HepG2 (cell line): ENCODE measurements at regions of chr19 and their contacts with region 1.

Region 1: GRCh38 chr19:35352448-35353304 is 5.0 kb downstream of the FFAR1 start:
- DNase-seq: peak; percentile 72
- ATAC-seq: peak; percentile 73
- H3K4me3 ChIP-seq: no peak overlapping the region
- H3K27ac ChIP-seq: no peak overlapping the region
- H3K4me1 ChIP-seq: peaks cover 60% of the 10 kb centered on the region
- H3K27me3 ChIP-seq: 0 out of 5 replicates have a peak, but pooled peaks cover 0 to 1% of the 10 kb centered on the region in 2 experiments
- CTCF ChIP-seq: peak; percentile 97
- EP300 ChIP-seq: no peak
- POLR2A ChIP-seq: no peak
- RAD21 ChIP-seq: peak; percentile 94

Region 2: GRCh38 chr19:35124098-35125060 is 228.3 kb before region 1 on chr19:
- CTCF ChIA-PET with region 1: no interaction called
- POLR2A ChIA-PET with region 1: no interaction called
- in situ Hi-C with region 1: no loop called
- intact Hi-C with region 1: no loop called
- DNase-seq: no peak
- ATAC-seq: no peak
- H3K4me3 ChIP-seq: no peak overlapping the region
- H3K27ac ChIP-seq: no peak overlapping the region
- H3K4me1 ChIP-seq: peaks cover 88% of the 10 kb centered on the region
- H3K27me3 ChIP-seq: no peaks in the 10 kb centered on the region
- CTCF ChIP-seq: no peak
- EP300 ChIP-seq: no peak
- POLR2A ChIP-seq: no peak
- RAD21 ChIP-seq: no peak

Region 3: GRCh38 chr19:35395382-35396199 is 42.9 kb after region 1 on chr19:
- CTCF ChIA-PET with region 1: no interaction called
- POLR2A ChIA-PET with region 1: no interaction called
- in situ Hi-C with region 1: no loop called
- intact Hi-C with region 1: loop called (anchors 5 kb)
- DNase-seq: peak; percentile 65
- ATAC-seq: peak; percentile 96
- H3K4me3 ChIP-seq: peak overlapping the region in 2 of 3 experiments; percentile 27 to 61; a peak in 2 of 6 replicates
- H3K27ac ChIP-seq: peak overlapping the region; percentile 58
- H3K4me1 ChIP-seq: peaks cover 50% of the 10 kb centered on the region
- H3K27me3 ChIP-seq: 0 out of 5 replicates have a peak, but pooled peaks cover 0 to 2% of the 10 kb centered on the region in 2 experiments
- CTCF ChIP-seq: peak; percentile 24; the same call in 1 of the 2 replicates
- EP300 ChIP-seq: peak in 1 of 2 experiments; percentile 7; a peak in 1 of 4 replicates
- POLR2A ChIP-seq: no peak
- RAD21 ChIP-seq: no peak

Region 4: DNA sequence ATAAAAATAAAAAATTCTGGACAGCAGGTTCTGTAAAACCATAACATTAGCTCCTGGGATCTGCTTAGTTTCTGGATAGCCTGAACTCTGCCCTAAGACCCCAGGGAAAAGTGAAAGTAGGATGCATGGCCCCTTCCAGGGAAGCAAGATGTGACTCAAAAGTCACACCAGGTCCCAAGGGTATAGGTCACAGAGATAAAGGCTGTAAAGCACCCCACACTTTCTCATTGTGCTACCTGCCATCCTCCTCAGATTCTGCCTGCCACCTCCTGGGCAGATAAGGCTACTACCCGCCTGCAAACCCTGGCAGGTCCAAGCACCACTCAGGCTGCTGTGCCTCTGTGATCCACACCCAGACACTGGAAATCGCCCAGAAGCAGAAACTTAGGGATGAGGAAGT is 116.0 kb after region 1 on chr19:
- CTCF ChIA-PET with region 1: interaction called, 41 read pairs
- POLR2A ChIA-PET with region 1: no interaction called
- in situ Hi-C with region 1: loop called (anchors 5 kb)
- intact Hi-C with region 1: loop called (anchors 1 kb)
- DNase-seq: peak; percentile 54
- ATAC-seq: peak; percentile 98
- H3K4me3 ChIP-seq: no peak overlapping the region
- H3K27ac ChIP-seq: no peak overlapping the region
- H3K4me1 ChIP-seq: peaks cover 61% of the 10 kb centered on the region
- H3K27me3 ChIP-seq: no peaks in the 10 kb centered on the region
- CTCF ChIP-seq: peak; percentile 94
- EP300 ChIP-seq: no peak
- POLR2A ChIP-seq: no peak
- RAD21 ChIP-seq: peak; percentile 92

Region 5: GRCh38 chr19:35478803-35479601 is 126.3 kb after region 1 on chr19:
- CTCF ChIA-PET with region 1: no interaction called
- POLR2A ChIA-PET with region 1: no interaction called
- in situ Hi-C with region 1: no loop called
- intact Hi-C with region 1: no loop called
- DNase-seq: no peak
- ATAC-seq: no peak
- H3K4me3 ChIP-seq: no peak overlapping the region
- H3K27ac ChIP-seq: no peak overlapping the region
- H3K4me1 ChIP-seq: peaks cover 10% of the 10 kb centered on the region
- H3K27me3 ChIP-seq: no peaks in the 10 kb centered on the region
- CTCF ChIP-seq: 0 out of 2 replicates have a peak, but pooled peaks have one; percentile 4
- EP300 ChIP-seq: no peak
- POLR2A ChIP-seq: no peak
- RAD21 ChIP-seq: no peak

Region 6: DNA sequence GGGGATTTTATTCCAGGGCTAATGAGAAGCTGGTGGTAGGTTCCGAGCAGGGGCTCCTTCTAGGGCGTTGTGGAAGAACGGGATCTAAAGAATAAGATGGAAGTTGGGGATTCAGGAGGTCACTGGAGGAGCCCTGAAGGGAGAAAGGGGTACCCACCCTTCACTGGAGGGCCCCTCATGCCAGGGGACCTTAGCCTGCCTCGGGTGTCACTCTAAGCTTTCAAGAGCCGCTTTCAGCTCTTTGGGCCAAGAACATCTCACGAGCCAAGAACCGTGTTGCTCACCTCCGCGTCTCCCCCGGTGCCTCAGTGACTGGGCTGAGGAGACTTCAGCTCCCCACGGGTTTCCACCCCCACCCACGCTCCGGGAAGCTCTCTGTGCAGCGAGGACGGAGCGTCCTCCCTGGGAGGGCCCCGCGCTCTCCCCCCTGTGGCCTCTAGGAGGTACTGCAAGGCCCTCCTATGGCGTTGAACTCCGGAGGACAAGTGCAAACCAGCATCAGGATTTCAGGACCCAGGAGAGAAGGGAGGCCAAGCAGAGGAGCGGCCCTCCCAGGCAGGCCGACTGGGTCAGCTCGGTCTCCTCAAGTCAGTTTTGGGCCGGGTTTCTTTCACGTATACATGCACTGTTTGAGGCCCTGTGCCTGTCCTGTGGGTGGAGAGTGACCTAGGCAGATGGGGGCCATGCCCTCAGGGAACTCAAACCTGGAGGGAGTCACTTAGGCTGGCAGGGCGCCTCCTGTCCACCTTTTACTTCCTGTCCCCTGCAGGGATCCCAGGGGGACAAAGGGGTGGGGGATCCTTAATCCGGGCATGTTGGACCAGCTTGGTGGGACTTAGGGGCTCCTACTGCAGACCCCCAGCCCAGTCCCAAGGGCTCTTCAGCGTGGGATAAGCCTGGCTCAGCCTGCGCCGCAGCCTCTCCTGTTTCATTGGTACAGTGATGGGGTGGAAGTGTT is 142.7 kb after region 1 on chr19:
- CTCF ChIA-PET with region 1: interaction called, 30 read pairs
- POLR2A ChIA-PET with region 1: interaction called, 3 read pairs
- in situ Hi-C with region 1: no loop called
- intact Hi-C with region 1: loop called (anchors 1 kb)
- DNase-seq: peak; percentile 54
- ATAC-seq: peak; percentile 93
- H3K4me3 ChIP-seq: peak overlapping the region; percentile 25 to 66 (median 44); a peak in 4 of 6 replicates
- H3K27ac ChIP-seq: no peak overlapping the region
- H3K4me1 ChIP-seq: peaks cover 15% of the 10 kb centered on the region
- H3K27me3 ChIP-seq: no peaks in the 10 kb centered on the region
- CTCF ChIP-seq: peak; percentile 98
- EP300 ChIP-seq: no peak
- POLR2A ChIP-seq: no peak
- RAD21 ChIP-seq: peak; percentile 91